ENCODE measurements at regions of chr13 and their contacts with region 1.

Region 1: DNA sequence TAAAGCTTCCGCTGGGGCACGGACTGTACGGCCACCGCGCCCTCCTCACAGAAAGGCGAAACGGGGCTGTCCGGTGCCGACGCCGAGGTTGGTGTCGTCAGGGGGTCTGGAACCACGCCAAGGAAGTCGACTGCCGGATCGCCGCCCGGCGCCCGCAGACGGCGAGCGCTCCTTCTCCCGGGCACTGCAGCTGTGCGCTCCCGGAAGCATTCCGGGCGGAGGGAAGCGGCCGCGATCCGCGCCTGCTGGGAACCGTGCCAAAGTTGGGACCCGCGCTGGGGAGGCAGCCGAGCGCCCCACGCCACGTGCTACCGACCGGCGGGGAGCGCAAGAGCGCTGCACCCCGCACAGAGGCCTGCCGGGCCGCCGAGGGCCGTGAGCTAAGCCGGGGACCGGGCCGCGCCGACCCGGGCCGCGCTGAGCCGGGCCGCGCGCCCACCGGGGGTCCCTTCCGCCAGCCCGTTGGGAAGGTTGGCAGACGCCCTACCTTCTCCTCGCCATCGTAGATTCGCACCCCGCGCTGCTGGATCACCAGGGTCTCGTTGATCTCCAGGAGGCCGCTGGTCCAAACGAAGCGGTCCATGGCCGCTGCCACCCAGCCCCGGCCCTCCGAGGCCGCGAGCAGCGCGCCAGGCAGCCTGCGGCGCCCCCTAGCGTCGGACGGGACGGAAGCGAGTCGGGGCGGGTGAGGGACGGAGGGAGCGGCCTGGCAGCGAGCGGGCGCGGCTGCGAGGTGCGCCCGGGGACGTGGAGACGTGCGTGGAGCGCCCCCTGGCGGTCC is at the start of gene VPS36:
- DNase-seq: peak; percentile 93
- H3K4me3 Mint-ChIP-seq: peak within 1 kb of the TSS; percentile 96
- H3K27ac Mint-ChIP-seq: peak within 1 kb of the TSS; percentile 93
- H3K4me1 Mint-ChIP-seq: peaks cover 57% of the 10 kb centered on the region
- H3K27me3 Mint-ChIP-seq: peaks cover 2% of the 10 kb centered on the region
- total RNA-seq, gene VPS36: 47.8 and 49.2 TPM in 2 replicates

Region 2: DNA sequence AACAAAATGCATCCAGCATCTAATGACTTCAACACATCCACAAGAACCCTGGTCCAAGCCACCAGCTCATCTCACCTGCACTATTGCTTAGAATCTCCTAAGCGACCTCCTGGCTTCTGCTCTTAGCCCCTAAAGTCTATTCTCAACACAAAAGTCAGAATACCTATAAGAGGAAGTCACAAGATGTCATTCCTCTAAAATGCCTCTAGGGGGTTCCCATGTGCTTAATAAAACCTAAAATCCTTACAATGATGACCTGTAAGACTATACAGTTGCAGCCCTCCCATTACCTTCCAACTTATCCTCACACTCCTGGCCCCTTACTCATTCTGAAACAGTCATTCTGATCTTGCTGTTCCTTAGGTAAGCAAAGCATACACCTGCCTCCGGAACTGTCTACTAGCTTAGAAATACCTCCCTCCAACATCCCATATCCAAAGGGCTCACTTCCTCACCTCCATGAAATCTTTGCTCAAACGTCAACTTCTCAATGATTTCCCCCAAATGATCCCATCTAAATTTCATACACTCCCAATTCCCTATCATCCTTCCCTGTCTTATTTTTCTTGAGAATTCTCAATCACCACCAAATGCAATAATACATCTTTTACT is 449.0 kb before region 1 on chr13:
- intact Hi-C with region 1: loop called (anchors 1 kb)
- DNase-seq: no peak
- H3K4me3 Mint-ChIP-seq: no peak overlapping the region
- H3K27ac Mint-ChIP-seq: no peak overlapping the region
- H3K4me1 Mint-ChIP-seq: no peaks in the 10 kb centered on the region
- H3K27me3 Mint-ChIP-seq: peaks cover 22% of the 10 kb centered on the region

Region 3: DNA sequence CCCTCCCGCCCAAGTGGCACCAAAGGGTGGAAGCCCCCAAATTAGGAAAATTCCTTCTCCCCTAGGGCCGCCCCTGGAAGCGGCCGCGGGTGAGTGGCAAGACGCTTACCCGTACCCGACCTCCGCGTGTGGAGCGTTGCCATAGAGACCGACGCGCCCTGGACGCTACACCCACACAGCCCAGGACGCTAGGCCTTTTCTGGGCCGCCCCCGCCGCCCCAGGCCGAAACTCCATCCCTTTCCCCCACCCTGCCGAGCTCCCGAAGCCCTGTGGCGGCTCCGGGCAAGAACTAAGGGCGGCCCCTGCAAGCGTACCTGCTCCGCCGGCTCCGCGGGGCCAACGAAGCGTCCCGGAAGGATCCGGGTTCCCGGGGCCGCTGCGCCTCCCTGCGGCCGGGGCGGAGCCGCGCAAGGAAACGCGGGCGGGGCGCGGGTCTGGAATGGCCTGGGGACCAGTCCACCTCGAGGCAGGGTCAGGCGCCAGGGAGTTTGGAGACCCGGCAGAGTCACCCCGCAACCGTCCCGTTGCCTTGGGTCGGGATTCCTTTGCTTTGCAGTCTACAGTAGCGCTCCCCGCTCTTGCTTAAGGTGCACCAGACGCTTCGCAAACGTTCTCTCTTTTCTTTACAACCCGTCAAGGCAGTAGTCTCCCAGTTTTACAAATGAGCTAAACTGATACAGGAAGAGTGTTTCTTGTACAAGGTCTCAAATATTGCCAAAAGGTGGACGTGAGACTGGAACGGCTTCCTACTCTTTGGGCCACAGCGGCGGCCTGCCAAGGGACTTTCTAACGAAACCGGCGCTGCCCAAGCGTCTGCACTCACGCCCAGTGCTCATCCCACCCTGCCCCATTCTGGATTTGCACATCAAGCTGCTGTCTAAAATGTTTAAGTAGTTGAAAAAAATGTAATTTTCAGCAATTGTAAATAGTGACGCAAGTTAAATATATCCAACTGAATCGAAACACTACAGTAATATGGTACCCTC is 321.2 kb before region 1 on chr13 and contains the start of gene NEK5:
- intact Hi-C with region 1: loop called (anchors 5 kb)
- DNase-seq: peak; percentile 52
- H3K4me3 Mint-ChIP-seq: peak within 1 kb of the TSS; percentile 77
- H3K27ac Mint-ChIP-seq: no peak within 1 kb of the TSS
- H3K4me1 Mint-ChIP-seq: peaks cover 14% of the 10 kb centered on the region
- H3K27me3 Mint-ChIP-seq: peaks cover 8% of the 10 kb centered on the region
- total RNA-seq, gene NEK5: not detected in 2 replicates

Region 4: GRCh38 chr13:52194184-52194868 is 255.9 kb before region 1 on chr13:
- intact Hi-C with region 1: loop called (anchors 2 kb)
- DNase-seq: peak; percentile 85
- H3K4me3 Mint-ChIP-seq: peak overlapping the region; percentile 95
- H3K27ac Mint-ChIP-seq: peak overlapping the region; percentile 95
- H3K4me1 Mint-ChIP-seq: peaks cover 20% of the 10 kb centered on the region
- H3K27me3 Mint-ChIP-seq: no peaks in the 10 kb centered on the region

Region 5: GRCh38 chr13:52405767-52406494 is 44.3 kb before region 1 on chr13 and contains the start of gene THSD1:
- intact Hi-C with region 1: loop called (anchors 5 kb)
- DNase-seq: no peak
- H3K4me3 Mint-ChIP-seq: peak within 1 kb of the TSS; percentile 62
- H3K27ac Mint-ChIP-seq: no peak within 1 kb of the TSS
- H3K4me1 Mint-ChIP-seq: peaks cover 16% of the 10 kb centered on the region
- H3K27me3 Mint-ChIP-seq: peaks cover 35% of the 10 kb centered on the region
- total RNA-seq, gene THSD1: 0.07 and 0.21 TPM in 2 replicates

Region 6: DNA sequence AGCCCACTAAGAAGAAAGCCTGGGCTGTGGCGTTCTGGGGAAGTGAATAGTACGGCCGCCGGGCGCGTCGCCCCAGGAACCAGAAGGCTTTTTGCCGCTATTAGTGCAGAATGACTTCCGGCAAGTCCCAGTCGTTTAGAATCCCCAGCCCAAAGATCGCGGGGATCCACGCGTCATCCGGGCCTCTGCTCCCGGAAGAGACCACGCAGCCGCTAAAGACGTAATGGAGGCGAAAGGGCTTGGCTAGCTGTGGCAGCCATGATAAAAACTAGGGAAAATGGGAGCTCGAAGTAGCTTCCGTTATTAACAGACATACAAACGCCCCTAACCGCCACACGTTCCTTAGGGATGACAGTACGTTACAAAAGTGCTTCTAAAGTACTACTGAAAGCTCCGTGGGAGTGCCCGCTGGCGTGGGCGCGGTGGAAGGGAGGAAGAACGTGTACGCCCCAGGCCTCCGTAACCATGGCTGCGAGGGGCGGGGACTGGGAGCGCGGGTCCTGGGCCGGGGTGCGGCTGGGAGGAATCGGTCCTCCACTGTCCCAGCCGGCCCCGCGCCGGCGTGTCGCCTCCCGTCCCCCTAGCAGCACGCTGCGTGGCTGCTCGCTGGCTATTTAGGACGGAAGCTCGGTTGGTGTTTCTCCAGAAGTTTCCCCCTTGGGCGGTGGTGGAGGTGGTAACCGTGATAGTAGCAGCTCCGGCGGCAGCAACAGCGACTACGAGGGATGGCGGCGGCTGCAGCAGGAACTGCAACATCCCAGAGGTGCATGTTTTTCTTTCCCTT is 202.2 kb after region 1 on chr13 and contains the start of gene SUGT1:
- intact Hi-C with region 1: loop called (anchors 1 kb)
- DNase-seq: peak; percentile 93
- H3K4me3 Mint-ChIP-seq: no peak within 1 kb of the TSS
- H3K27ac Mint-ChIP-seq: no peak within 1 kb of the TSS
- H3K4me1 Mint-ChIP-seq: peaks cover 15% of the 10 kb centered on the region
- H3K27me3 Mint-ChIP-seq: no peaks in the 10 kb centered on the region
- total RNA-seq, gene SUGT1: 63.3 and 66.1 TPM in 2 replicates